WTC11 (cell line): ENCODE measurements at regions of chr7 and their contacts with region 1.

Region 1: GRCh38 chr7:12436896-12437535 is 33.4 kb upstream of the VWDE start:
- DNase-seq: peak; percentile 51
- ATAC-seq: peak; percentile 91
- H3K4me3 Mint-ChIP-seq: no peak overlapping the region
- H3K27ac Mint-ChIP-seq: no peak overlapping the region
- H3K4me1 Mint-ChIP-seq: peaks cover 27% of the 10 kb centered on the region
- H3K27me3 Mint-ChIP-seq: no peaks in the 10 kb centered on the region; the same call in 1 of the 2 replicates
- CTCF ChIP-seq: no peak

Region 2: DNA sequence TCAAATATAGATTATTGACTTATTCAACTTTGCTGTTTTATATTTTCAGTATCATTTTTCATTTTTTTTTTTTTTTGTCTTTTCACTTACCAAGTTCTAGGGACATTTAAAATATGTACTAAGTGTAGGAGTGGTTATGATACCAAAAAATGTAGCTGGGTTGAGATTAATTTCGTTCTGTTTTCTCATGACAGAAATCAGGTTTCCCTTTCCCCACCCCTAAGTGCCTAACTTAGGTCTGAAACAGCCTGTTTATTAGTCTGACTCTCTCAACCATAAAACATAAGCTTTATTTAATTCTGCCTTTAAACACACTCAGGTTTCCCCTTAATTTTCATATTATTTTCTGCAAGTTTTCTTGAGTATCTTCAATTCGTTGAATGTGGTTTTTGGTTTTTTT is 203.8 kb before region 1 on chr7:
- CTCF ChIA-PET with region 1: no interaction called
- POLR2A ChIA-PET with region 1: no interaction called
- DNase-seq: no peak
- ATAC-seq: no peak
- H3K4me3 Mint-ChIP-seq: no peak overlapping the region
- H3K27ac Mint-ChIP-seq: no peak overlapping the region
- H3K4me1 Mint-ChIP-seq: no peaks in the 10 kb centered on the region
- H3K27me3 Mint-ChIP-seq: no peaks in the 10 kb centered on the region
- CTCF ChIP-seq: no peak

Region 3: GRCh38 chr7:12244129-12244528 is 192.9 kb before region 1 on chr7:
- CTCF ChIA-PET with region 1: no interaction called
- POLR2A ChIA-PET with region 1: no interaction called
- DNase-seq: peak; percentile 51
- ATAC-seq: peak; percentile 98
- H3K4me3 Mint-ChIP-seq: no peak overlapping the region
- H3K27ac Mint-ChIP-seq: no peak overlapping the region
- H3K4me1 Mint-ChIP-seq: no peaks in the 10 kb centered on the region
- H3K27me3 Mint-ChIP-seq: no peaks in the 10 kb centered on the region
- CTCF ChIP-seq: no peak

Region 4: DNA sequence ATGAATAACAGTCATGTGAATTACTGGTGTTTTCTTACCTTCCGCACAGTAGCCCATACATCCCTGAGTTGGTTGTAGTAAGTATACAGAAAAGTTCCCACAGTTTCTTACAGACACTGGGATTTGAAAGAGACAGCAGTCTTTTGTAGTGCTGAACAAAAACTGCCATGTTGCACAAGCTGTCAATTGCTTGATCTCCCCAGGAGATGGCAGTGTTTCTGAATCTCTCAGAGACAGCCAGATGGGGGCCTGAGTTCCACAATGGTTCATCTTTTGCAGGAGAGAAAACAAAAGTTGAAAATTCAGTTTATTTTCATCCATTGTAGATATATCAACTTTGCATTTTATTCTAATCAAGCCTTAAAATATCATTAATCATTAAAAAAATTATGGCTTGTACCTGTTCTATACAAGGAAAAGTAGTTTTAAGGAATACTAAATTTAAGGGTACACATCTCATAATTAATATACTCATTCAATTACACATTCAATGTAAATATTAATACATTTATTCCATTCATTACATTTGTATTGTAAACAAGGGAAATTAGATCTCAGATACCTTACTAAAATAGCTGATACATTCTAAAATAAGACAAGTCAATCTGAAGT is 47.8 kb before region 1 on chr7:
- CTCF ChIA-PET with region 1: interaction called, 10 read pairs
- POLR2A ChIA-PET with region 1: no interaction called
- DNase-seq: peak; percentile 65
- ATAC-seq: peak; percentile 93
- H3K4me3 Mint-ChIP-seq: no peak overlapping the region
- H3K27ac Mint-ChIP-seq: no peak overlapping the region
- H3K4me1 Mint-ChIP-seq: peaks cover 30% of the 10 kb centered on the region
- H3K27me3 Mint-ChIP-seq: no peaks in the 10 kb centered on the region
- CTCF ChIP-seq: peak; percentile 62

Region 5: DNA sequence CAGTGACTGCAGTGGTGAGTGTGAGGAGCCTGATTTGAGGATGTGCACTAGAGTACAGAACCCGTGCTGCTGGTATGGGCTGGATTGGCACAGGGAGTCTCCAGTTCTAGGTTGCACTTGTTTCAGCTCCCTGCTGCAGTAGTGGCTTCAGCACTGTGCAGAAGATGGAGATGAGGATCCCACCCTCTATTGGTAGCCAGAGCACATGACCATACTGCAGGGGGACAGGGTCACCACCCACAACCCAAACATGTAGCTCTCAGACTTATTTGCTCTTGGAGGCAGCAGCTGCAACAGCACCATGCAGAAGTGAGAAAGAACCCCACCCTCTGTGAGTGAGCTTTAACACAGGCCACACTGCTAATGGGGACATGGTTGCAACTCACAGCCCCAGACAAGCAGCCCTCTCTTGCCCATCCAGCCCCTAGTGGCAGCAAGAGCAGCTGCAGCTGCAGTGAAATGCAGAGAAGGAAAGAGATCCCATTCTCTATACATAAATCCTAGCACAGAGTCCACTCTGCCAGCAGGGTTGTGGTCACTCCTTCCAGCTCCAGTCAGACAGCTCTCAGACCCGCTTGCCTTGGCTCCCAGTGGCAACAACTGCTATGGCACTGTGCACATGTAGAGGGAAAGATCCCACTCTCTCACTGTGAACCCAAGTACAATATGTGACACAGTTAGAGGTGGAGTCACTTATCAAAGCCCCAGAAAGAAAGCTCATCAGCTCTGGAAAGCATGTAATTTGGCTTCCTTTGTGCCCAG is 82.1 kb after region 1 on chr7:
- CTCF ChIA-PET with region 1: interaction called, 20 read pairs
- POLR2A ChIA-PET with region 1: no interaction called
- DNase-seq: peak; percentile 68
- ATAC-seq: peak; percentile 98
- H3K4me3 Mint-ChIP-seq: no peak overlapping the region
- H3K27ac Mint-ChIP-seq: no peak overlapping the region
- H3K4me1 Mint-ChIP-seq: peaks cover 3% of the 10 kb centered on the region
- H3K27me3 Mint-ChIP-seq: peaks cover 5% of the 10 kb centered on the region; the same call in 1 of the 2 replicates
- CTCF ChIP-seq: peak; percentile 75